ENCODE measurements at regions of chr11 and their contacts with region 1.

Region 1: GRCh38 chr11:61532139-61533038 is 23.8 kb downstream of the LRRC10B start:
- DNase-seq: no peak
- ATAC-seq: no peak
- H3K4me3 ChIP-seq: no peak overlapping the region
- H3K27ac ChIP-seq: no peak overlapping the region
- H3K4me1 ChIP-seq: peaks cover 0 to 46% (median 16%) of the 10 kb centered on the region in 12 donors
- H3K27me3 ChIP-seq: no peaks in the 10 kb centered on the region
- CTCF ChIP-seq: peak; percentile 63 to 86 (median 78)
- POLR2A ChIP-seq: no peak

Region 2: GRCh38 chr11:61406067-61406466 is 126.3 kb before region 1 on chr11:
- intact Hi-C with region 1: no loop called
- DNase-seq: no peak
- ATAC-seq: no peak
- H3K4me3 ChIP-seq: no peak overlapping the region
- H3K27ac ChIP-seq: peak overlapping the region in 1 of 12 donors; percentile 42
- H3K4me1 ChIP-seq: no peaks in the 10 kb centered on the region
- H3K27me3 ChIP-seq: no peaks in the 10 kb centered on the region
- CTCF ChIP-seq: no peak
- POLR2A ChIP-seq: no peak

Region 3: GRCh38 chr11:61581030-61581928 is 48.9 kb after region 1 on chr11 and contains the start of gene SYT7:
- intact Hi-C with region 1: loop called in 3 of 10 experiments (anchors 2 to 5 kb)
- DNase-seq: peak; percentile 95 to 97 (median 96)
- ATAC-seq: peak; percentile 70 to 84 (median 84)
- H3K4me3 ChIP-seq: peak within 1 kb of the TSS; percentile 44 to 83 (median 62)
- H3K27ac ChIP-seq: peak within 1 kb of the TSS; percentile 26 to 92 (median 78)
- H3K4me1 ChIP-seq: peaks cover 0 to 36% (median 14%) of the 10 kb centered on the region in 12 donors
- H3K27me3 ChIP-seq: peaks cover 0 to 36% (median 2%) of the 10 kb centered on the region in 9 donors
- CTCF ChIP-seq: peak in 5 of 12 donors; percentile 3 to 17 (median 9)
- POLR2A ChIP-seq: peak in 1 of 2 donors; percentile 49
- total RNA-seq, gene SYT7: 12.4 to 22.7 (median 17.4) TPM

Region 4: DNA sequence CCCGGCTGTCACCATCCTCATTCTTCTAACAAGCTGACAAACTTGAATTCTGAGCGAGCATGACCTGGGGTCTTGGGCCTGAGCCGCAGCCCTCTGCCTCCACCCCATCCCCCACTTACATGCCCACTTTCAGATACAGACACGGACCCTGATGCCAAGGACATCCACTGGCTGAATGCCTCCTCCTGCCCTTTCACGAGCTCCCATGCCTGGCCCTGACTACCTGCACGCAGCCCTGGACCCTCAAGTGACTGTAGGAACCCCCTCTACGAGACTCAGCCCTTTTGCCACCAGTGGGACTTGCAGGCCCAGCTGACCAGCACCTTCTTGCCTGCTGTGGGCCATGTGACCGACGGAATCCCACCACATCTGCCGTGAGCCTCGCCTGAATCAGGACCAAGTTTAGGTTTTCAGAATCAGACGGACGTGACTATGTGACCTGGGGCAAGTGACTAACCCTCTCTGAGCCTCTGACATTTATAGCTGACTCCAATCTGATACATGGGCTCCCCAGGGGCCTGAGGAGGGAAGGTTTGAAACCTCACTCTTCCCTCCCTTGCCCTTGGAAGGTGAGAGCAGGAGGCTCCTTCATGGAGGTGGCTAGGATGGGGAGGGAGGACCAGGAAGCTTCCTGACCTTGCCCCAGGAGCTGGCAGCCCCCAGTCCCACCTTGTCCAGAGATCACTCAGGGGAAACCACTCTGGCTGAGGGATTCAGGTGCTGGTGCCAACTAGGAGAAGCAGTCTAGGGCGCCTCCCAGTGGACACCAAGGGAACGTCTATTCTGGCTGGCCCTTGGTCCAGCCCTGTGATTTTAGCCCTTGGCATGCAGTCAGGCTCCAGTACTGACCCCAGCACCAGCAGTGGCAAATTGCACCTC is 95.4 kb after region 1 on chr11:
- intact Hi-C with region 1: loop called in 5 of 10 experiments (anchors 2 to 10 kb)
- DNase-seq: peak; percentile 71 to 81 (median 75)
- ATAC-seq: peak; percentile 51 to 84 (median 80)
- H3K4me3 ChIP-seq: no peak overlapping the region
- H3K27ac ChIP-seq: peak overlapping the region in 8 of 12 donors; percentile 81 to 94 (median 88)
- H3K4me1 ChIP-seq: peaks cover 0 to 24% (median 10%) of the 10 kb centered on the region in 12 donors
- H3K27me3 ChIP-seq: no peaks in the 10 kb centered on the region
- CTCF ChIP-seq: peak; percentile 58 to 89 (median 82)
- POLR2A ChIP-seq: no peak

Region 5: DNA sequence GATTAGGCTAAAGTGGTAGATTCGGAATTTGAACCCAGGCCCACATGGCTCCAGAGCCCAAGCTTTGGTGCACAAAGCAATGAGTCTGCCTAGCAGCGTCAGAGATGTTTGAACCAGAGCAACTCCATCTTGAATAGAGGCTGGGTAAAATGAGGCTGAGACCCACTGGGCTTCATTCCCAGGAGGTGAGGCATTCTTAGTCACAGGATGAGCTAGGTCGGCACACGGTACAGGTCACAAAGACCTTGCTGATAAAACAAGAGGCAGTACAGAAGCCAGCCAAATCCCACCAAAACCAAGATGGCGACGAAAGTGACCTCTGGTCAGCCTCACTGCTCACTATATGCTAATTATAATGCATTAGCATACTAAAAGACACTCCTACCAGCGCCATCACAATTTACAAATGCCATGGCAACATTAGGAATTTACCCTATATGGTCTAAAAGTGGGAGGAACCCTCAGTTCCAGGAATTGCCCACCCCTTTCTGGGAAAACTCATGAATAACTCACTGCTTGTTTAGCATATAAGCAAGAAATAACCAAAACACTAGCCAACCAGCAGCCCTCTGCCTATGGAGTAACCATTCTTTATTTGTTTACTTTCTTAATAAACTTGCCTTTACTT is 107.5 kb after region 1 on chr11:
- intact Hi-C with region 1: loop called in 1 of 10 experiments (anchors 10 kb)
- DNase-seq: no peak
- ATAC-seq: no peak
- H3K4me3 ChIP-seq: no peak overlapping the region
- H3K27ac ChIP-seq: no peak overlapping the region
- H3K4me1 ChIP-seq: peaks cover 0 to 6% (median 0%) of the 10 kb centered on the region in 12 donors
- H3K27me3 ChIP-seq: peaks cover 0 to 3% (median 0%) of the 10 kb centered on the region in 9 donors
- CTCF ChIP-seq: no peak
- POLR2A ChIP-seq: no peak

Region 6: DNA sequence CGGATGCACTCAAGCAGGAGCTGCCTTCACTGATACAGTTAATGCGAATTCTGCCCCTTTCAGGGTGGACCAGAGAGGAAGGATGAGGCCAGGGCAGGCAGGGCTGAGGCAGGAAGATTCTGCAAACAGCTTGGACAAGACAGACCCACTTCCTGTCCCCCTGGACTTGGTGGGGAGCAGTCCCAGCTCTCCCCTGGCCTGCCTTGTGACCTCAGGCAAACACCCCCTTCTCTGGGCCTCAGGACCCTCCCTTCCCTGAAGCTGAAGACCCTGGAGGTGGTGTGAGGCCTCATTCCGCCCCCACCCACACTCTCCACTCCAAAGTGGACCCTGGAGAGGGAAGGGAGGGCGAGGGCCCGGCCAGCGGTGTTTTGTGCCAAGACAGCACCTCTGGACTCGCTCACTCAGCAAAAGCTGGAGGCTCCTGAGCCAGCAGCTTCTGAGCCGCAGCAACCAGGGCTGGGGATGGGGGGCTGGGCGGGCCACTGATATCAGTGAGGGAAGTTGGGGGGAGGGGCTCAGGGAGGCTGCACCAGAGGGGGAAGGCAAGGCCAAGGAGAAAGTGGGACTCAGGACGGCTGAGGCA is 376.4 kb after region 1 on chr11:
- intact Hi-C with region 1: no loop called
- DNase-seq: peak; percentile 69 to 85 (median 72)
- ATAC-seq: peak in 3 of 4 donors; percentile 33 to 58 (median 52)
- H3K4me3 ChIP-seq: peak overlapping the region in 1 of 12 donors; percentile 26
- H3K27ac ChIP-seq: peak overlapping the region in 8 of 12 donors; percentile 15 to 71 (median 46)
- H3K4me1 ChIP-seq: peaks cover 0 to 54% (median 31%) of the 10 kb centered on the region in 12 donors
- H3K27me3 ChIP-seq: no peaks in the 10 kb centered on the region
- CTCF ChIP-seq: no peak
- POLR2A ChIP-seq: no peak